SK-N-SH (cell line): ENCODE measurements at regions of chr16 and their contacts with region 1.

Region 1: GRCh38 chr16:180938-181667 is 844 bp downstream of the HBQ1 start:
- DNase-seq: peak; percentile 95
- H3K4me3 ChIP-seq: peak overlapping the region; percentile 42 to 56
- H3K27ac ChIP-seq: no peak overlapping the region
- H3K4me1 ChIP-seq: peaks cover 0 to 10% of the 10 kb centered on the region in 2 experiments; a peak in 1 of 4 replicates
- H3K27me3 ChIP-seq: peaks cover 14% of the 10 kb centered on the region
- CTCF ChIP-seq: peak; percentile 86
- EP300 ChIP-seq: no peak
- RAD21 ChIP-seq: peak; percentile 67

Region 2: DNA sequence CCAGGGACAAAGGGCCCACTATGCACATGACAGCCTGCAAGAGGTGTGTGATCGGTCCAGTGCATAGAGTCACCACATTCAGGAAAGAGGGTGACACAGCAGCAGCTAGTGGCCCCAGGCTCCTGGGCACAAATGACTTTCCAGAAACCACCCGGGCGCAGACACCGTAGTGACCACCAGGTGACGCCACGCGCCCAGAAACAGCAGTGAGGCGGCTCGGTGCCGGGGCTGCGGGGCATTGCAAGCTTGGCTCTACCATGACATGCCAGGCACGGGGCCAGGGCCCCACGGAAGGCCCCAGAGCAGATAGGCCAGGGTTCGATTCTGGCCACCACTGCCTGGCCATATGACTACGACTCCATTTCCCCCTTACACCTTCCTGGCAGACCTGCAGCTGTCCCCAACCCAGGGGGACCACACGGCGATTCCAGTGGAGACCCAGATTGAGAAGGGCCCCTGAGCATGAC is 115.4 kb before region 1 on chr16:
- CTCF ChIA-PET with region 1: interaction called, 105 read pairs
- POLR2A ChIA-PET with region 1: no interaction called
- DNase-seq: peak; percentile 95
- H3K4me3 ChIP-seq: peak overlapping the region in 1 of 2 experiments; percentile 44; a peak in 1 of 4 replicates
- H3K27ac ChIP-seq: no peak overlapping the region
- H3K4me1 ChIP-seq: peaks cover 0 to 3% of the 10 kb centered on the region in 2 experiments; a peak in 2 of 4 replicates
- H3K27me3 ChIP-seq: no peaks in the 10 kb centered on the region
- CTCF ChIP-seq: peak; percentile 91
- EP300 ChIP-seq: no peak
- RAD21 ChIP-seq: peak; percentile 96

Region 3: GRCh38 chr16:129075-129474 is 52.0 kb before region 1 on chr16:
- CTCF ChIA-PET with region 1: interaction called, 22 read pairs
- POLR2A ChIA-PET with region 1: interaction called, 5 read pairs
- DNase-seq: no peak
- H3K4me3 ChIP-seq: no peak overlapping the region
- H3K27ac ChIP-seq: no peak overlapping the region
- H3K4me1 ChIP-seq: no peaks in the 10 kb centered on the region
- H3K27me3 ChIP-seq: no peaks in the 10 kb centered on the region
- CTCF ChIP-seq: no peak
- EP300 ChIP-seq: no peak
- RAD21 ChIP-seq: no peak

Region 4: GRCh38 chr16:164827-165538 is 16.1 kb before region 1 on chr16:
- CTCF ChIA-PET with region 1: interaction called, 28 read pairs
- POLR2A ChIA-PET with region 1: no interaction called
- DNase-seq: peak; percentile 94
- H3K4me3 ChIP-seq: peak overlapping the region in 1 of 2 experiments; percentile 32; a peak in 2 of 4 replicates
- H3K27ac ChIP-seq: no peak overlapping the region
- H3K4me1 ChIP-seq: peaks cover 0 to 13% of the 10 kb centered on the region in 2 experiments; a peak in 1 of 4 replicates
- H3K27me3 ChIP-seq: peaks cover 28% of the 10 kb centered on the region
- CTCF ChIP-seq: no peak
- EP300 ChIP-seq: no peak
- RAD21 ChIP-seq: no peak

Region 5: DNA sequence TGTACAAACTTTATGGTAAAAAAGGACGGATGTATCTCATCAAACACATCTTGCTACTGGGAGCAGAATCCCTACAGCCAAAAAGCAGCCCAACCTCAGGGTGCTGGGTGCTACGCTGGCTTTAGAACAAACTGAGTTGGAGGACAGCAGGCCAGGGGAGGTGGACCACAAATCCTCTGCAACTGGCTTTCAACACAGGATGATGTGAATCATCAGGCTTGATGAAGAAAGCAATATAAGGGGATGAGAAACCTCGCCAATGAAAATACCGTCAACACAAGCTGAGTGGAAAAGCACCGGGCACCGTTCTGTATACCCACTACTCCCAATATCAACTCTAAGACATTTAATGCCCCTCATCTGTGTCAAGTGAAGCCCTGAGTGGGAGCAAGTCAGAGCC is 13.4 kb after region 1 on chr16:
- CTCF ChIA-PET with region 1: interaction called, 44 read pairs
- POLR2A ChIA-PET with region 1: no interaction called
- DNase-seq: no peak
- H3K4me3 ChIP-seq: no peak overlapping the region
- H3K27ac ChIP-seq: no peak overlapping the region
- H3K4me1 ChIP-seq: no peaks in the 10 kb centered on the region
- H3K27me3 ChIP-seq: no peaks in the 10 kb centered on the region
- CTCF ChIP-seq: no peak
- EP300 ChIP-seq: no peak
- RAD21 ChIP-seq: no peak

Region 6: DNA sequence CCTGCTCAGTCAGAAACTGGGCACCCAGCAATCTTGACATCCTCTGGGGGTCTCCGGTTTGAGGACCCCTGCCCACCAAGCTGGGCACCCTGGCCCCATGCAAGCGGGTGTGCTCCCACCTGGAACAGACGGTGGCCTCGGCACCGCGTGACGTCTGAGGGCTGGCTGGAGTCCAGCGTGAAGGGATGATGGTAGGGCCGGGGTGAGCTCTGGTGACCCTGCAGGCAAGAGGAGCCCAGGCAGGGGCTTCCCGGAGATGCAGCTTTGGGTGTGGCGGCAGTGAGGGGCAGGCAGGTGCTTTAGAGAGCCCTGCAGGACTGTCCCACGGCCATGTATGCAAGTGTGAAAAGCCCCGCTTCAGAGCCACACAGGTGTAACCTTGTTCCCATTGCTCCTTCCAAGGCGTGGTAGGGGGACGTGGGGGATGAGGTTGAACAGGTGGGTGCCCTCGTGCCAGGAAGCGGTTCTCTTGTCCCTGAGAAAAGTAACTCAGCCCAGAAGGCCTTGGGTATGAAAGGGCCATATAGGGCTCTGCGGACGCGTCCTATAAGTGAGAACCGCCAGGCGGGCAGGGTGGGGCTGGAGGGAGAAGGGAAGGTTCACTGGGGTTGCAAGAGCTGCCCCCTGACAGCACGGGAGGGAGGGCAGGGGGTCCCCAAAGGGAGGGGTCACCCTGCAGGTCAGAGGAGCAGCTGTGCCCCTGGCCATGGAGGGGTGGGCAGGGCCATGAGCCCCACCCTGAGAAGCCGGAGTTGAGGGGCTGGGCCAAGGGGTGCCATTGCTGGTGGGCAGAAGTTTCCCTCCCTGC is 85.4 kb after region 1 on chr16:
- CTCF ChIA-PET with region 1: no interaction called
- POLR2A ChIA-PET with region 1: no interaction called
- DNase-seq: peak; percentile 29
- H3K4me3 ChIP-seq: no peak overlapping the region
- H3K27ac ChIP-seq: no peak overlapping the region
- H3K4me1 ChIP-seq: peaks cover 0 to 8% of the 10 kb centered on the region in 2 experiments; a peak in 1 of 4 replicates
- H3K27me3 ChIP-seq: no peaks in the 10 kb centered on the region
- CTCF ChIP-seq: no peak
- EP300 ChIP-seq: no peak
- RAD21 ChIP-seq: no peak